HAP-1 (cell line): ENCODE measurements at regions of chr1 and their contacts with region 1.

Region 1: GRCh38 chr1:10398734-10399623 is at the start of gene PGD:
- DNase-seq: peak; percentile 98 to 100
- H3K4me3 ChIP-seq: peak within 1 kb of the TSS; percentile 90
- H3K4me1 ChIP-seq: peaks cover 14% of the 10 kb centered on the region
- H3K27me3 ChIP-seq: no peaks in the 10 kb centered on the region

Region 2: DNA sequence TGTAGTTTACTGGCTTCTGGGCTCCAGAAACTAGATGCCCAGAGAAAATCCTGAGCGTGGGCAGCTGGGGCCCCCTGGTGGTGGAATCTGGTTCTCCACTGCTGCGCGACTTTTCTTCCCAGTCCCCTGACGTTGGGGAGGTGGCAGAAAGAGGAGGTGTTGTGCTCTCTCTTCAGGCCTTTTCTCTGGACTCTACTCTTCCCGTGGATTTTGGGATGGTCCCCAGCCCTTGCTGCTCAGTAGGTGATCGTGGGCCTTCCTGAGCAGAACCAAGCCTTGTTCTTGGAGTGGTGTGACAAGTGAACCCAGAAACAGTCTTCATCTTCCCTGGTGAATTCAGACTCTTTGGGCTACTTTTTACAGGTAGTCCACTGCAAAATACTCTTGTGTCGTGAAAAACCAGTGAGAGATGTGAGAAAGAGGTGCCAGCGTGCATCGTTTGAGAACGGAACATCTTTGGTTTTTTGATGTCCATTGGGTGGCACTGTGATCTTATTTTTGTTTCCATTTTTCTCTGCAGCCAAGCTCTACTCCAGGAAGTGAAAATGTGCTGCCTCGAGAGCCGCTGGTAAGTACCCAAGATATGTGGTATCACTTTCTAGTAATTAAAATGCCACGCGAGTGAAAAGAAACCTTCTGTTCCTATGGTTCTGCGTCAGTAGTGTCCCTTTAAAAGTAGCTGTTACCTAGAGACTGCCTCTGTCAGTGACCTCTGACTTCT is 95.9 kb after region 1 on chr1:
- in situ Hi-C with region 1: loop called (anchors 25 kb)
- DNase-seq: peak; percentile 54 to 87
- H3K4me3 ChIP-seq: no peak overlapping the region
- H3K4me1 ChIP-seq: peaks cover 18% of the 10 kb centered on the region
- H3K27me3 ChIP-seq: no peaks in the 10 kb centered on the region

Region 3: DNA sequence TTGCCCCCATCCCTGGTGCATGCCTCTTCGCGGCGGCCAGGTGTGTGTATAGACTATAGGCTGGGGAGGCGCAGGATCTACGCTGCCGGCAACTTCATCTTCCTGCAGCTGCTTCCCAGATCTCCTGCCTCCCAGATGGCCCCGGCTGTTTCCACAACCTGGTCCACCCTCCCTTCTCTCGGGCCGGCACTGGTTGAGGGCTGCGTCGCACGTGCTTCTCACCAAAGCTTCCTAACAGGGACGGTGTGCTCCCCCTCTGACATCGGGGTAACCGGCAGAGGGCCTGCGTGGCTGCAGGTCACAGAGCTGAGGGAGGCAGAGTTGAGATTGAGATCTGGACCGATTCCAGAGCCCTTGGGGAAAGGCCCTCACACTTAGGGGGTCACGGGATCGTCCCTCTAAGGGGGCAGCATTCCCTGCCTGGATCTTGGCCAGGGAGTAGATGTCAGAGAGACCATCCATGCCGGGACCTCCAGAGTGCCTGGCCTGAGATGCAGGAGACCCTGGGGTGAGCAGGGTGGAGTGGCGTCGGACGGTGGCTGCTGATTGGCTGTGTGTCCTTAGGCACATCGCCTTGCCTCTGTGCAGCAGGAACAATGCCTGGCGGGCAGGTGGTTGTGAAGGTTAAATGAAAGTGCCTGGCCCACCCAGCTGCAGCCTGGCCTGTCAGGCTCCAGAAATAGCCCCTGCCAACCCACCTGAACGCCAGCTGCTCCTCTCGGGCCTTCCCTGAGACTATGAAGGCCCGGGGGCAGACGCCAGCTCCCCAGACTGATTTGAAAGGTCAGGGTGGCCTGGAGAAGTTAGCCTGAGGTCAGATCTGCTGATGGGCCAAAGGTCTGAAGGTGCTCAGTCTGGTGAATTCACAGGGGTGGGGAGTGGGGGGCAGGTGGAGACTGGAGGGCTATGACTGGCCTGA is 654.1 kb after region 1 on chr1:
- in situ Hi-C with region 1: no loop called
- DNase-seq: peak in 1 of 2 experiments; percentile 52
- H3K4me3 ChIP-seq: no peak overlapping the region
- H3K4me1 ChIP-seq: peaks cover 22% of the 10 kb centered on the region
- H3K27me3 ChIP-seq: no peaks in the 10 kb centered on the region